IMR-90 (cell line): ENCODE measurements at regions of chr2 and their contacts with region 1.

Region 1: DNA sequence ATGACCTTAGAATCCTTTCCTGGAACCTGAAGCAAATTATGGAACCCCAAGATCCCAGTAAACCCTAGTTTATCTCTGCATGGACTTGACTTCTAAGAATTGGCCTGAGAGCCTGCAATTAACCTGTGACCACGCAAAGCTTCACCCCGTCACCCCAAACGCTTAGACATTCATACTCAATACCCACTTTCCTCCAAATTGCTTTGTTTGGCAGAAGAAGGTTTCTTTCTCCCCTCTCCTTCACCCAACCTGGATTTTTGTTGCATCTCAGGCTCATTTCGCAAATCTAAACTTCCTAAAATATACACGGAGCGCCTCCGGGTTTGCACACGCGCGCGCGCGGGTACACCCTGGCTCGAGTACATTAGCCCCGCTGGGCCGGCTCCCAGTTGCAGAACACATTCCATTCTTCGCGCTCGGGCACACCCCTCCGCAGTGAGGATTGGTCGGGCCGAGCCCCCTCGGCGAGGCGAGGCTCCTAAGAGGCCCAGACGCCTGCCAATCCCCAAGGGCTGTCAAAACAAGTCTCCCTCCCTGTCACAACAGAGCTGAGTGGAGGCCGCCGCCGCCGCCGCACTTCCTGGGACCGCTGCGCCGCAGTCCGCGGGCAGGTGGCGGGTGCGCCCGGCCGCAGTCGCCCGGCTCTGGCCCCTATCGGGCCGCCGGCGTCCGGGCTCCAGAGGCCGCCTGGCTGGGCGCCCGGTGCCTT is at the start of gene PLCL1:
- DNase-seq: peak; percentile 87
- ATAC-seq: peak; percentile 99
- H3K4me3 ChIP-seq: peak within 1 kb of the TSS; percentile 62
- H3K27ac ChIP-seq: no peak within 1 kb of the TSS
- H3K4me1 ChIP-seq: no peaks in the 10 kb centered on the region
- H3K27me3 ChIP-seq: peaks cover 19% of the 10 kb centered on the region
- CTCF ChIP-seq: no peak
- POLR2A ChIP-seq: no peak
- RAD21 ChIP-seq: no peak
- total RNA-seq, gene PLCL1: 0.18 and 0.56 TPM in 2 replicates

Region 2: GRCh38 chr2:197908990-197909776 is 105.0 kb after region 1 on chr2:
- CTCF ChIA-PET with region 1: no interaction called
- POLR2A ChIA-PET with region 1: no interaction called
- dilution Hi-C with region 1: no loop called
- in situ Hi-C with region 1: no loop called
- intact Hi-C with region 1: loop called (anchors 5 kb)
- DNase-seq: peak; percentile 97
- ATAC-seq: peak; percentile 94
- H3K4me3 ChIP-seq: no peak overlapping the region
- H3K27ac ChIP-seq: peak overlapping the region; percentile 94; the same call in 1 of the 2 replicates
- H3K4me1 ChIP-seq: peaks cover 5% of the 10 kb centered on the region
- H3K27me3 ChIP-seq: no peaks in the 10 kb centered on the region
- CTCF ChIP-seq: no peak
- POLR2A ChIP-seq: no peak
- RAD21 ChIP-seq: no peak; the same call in 1 of the 2 replicates

Region 3: GRCh38 chr2:197986977-197987376 is 182.8 kb after region 1 on chr2:
- CTCF ChIA-PET with region 1: no interaction called
- POLR2A ChIA-PET with region 1: no interaction called
- dilution Hi-C with region 1: no loop called
- in situ Hi-C with region 1: no loop called
- intact Hi-C with region 1: loop called (anchors 2 kb)
- DNase-seq: no peak
- ATAC-seq: no peak
- H3K4me3 ChIP-seq: no peak overlapping the region
- H3K27ac ChIP-seq: no peak overlapping the region
- H3K4me1 ChIP-seq: no peaks in the 10 kb centered on the region
- H3K27me3 ChIP-seq: no peaks in the 10 kb centered on the region
- CTCF ChIP-seq: no peak
- POLR2A ChIP-seq: no peak
- RAD21 ChIP-seq: no peak

Region 4: GRCh38 chr2:198053776-198054698 is 249.8 kb after region 1 on chr2:
- CTCF ChIA-PET with region 1: no interaction called
- POLR2A ChIA-PET with region 1: no interaction called
- dilution Hi-C with region 1: no loop called
- in situ Hi-C with region 1: loop called (anchors 10 kb)
- intact Hi-C with region 1: loop called (anchors 1 kb)
- DNase-seq: peak; percentile 37
- ATAC-seq: peak; percentile 68
- H3K4me3 ChIP-seq: no peak overlapping the region
- H3K27ac ChIP-seq: no peak overlapping the region
- H3K4me1 ChIP-seq: no peaks in the 10 kb centered on the region
- H3K27me3 ChIP-seq: no peaks in the 10 kb centered on the region
- CTCF ChIP-seq: peak; percentile 54
- POLR2A ChIP-seq: no peak
- RAD21 ChIP-seq: peak; percentile 51

Region 5: GRCh38 chr2:198127627-198128026 is 323.4 kb after region 1 on chr2:
- CTCF ChIA-PET with region 1: interaction called, 4 read pairs
- POLR2A ChIA-PET with region 1: no interaction called
- dilution Hi-C with region 1: no loop called
- in situ Hi-C with region 1: loop called (anchors 5 kb)
- intact Hi-C with region 1: loop called (anchors 1 kb)
- DNase-seq: peak; percentile 71
- ATAC-seq: peak; percentile 85
- H3K4me3 ChIP-seq: no peak overlapping the region
- H3K27ac ChIP-seq: no peak overlapping the region
- H3K4me1 ChIP-seq: no peaks in the 10 kb centered on the region
- H3K27me3 ChIP-seq: no peaks in the 10 kb centered on the region
- CTCF ChIP-seq: peak; percentile 64
- POLR2A ChIP-seq: no peak
- RAD21 ChIP-seq: peak; percentile 73

Region 6: DNA sequence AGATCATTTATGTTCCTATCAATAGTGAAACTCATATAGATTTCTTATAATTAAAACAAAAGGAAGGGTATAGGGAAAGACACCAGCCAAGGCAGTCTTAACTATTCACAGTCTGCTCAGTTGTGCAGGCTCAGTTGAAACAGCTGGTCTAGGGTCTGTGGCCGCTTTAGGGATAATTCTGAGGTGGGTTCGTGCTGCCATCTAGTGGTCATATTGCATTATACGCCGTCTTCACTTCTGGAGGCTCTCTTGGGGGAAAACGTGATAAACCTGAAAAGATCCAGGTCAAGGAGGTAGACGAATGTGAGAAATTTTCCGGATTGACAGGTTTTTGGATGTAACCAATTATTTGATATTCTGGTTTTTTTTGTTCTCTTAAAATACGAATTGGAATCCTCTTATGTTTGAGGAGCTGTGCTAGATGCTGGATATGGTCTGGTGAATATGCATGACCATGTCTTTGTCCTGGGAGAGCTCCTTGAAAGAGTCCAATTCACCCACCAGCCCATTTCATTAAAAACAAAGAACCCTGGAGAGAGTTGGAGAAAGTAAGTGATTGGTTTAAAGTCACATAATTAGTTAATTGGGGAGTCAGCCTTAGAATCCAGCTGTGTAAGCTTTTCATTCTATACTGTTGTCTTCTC is 492.6 kb after region 1 on chr2:
- CTCF ChIA-PET with region 1: interaction called, 3 read pairs
- POLR2A ChIA-PET with region 1: no interaction called
- dilution Hi-C with region 1: no loop called
- in situ Hi-C with region 1: loop called (anchors 5 kb)
- intact Hi-C with region 1: loop called (anchors 1 kb)
- DNase-seq: peak; percentile 40
- ATAC-seq: peak; percentile 92
- H3K4me3 ChIP-seq: no peak overlapping the region
- H3K27ac ChIP-seq: no peak overlapping the region
- H3K4me1 ChIP-seq: no peaks in the 10 kb centered on the region
- H3K27me3 ChIP-seq: peaks cover 1% of the 10 kb centered on the region; the same call in 1 of the 2 replicates
- CTCF ChIP-seq: peak; percentile 63
- POLR2A ChIP-seq: no peak
- RAD21 ChIP-seq: peak; percentile 67